Activated B cell treated with CpG ODN at 0.5 μM for 24 hours (primary cell): ENCODE measurements at regions of chr15 and their contacts with region 1.

Region 1: DNA sequence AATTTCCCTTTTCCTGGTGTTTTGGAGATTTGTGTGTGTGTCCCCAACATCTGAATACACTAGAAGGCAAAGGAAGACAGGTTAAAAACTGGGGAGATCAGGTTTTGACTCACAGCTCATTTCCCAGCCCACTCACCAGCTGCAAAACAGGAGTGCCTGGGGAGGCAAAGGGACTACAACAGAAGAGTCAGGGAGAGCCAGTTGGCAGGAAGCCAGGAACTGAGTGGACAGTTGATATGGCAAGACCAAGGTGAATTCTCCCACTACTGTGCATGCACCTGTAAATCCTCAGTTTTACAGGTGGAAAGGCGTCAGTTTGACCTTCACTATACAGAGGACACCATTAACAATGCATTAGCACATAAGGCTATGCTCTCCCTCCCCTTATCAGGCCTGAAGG is 901.5 kb upstream of the SEMA6D start:
- DNase-seq: no peak
- ATAC-seq: no peak
- H3K4me3 Mint-ChIP-seq: no peak overlapping the region
- H3K27ac Mint-ChIP-seq: no peak overlapping the region
- H3K4me1 Mint-ChIP-seq: no peaks in the 10 kb centered on the region
- H3K27me3 Mint-ChIP-seq: no peaks in the 10 kb centered on the region
- CTCF ChIP-seq: no peak

Region 2: GRCh38 chr15:46880791-46881190 is 65.0 kb after region 1 on chr15:
- CTCF ChIA-PET with region 1: no interaction called
- POLR2A ChIA-PET with region 1: no interaction called
- intact Hi-C with region 1: loop called (anchors 10 kb)
- DNase-seq: no peak
- ATAC-seq: no peak
- H3K4me3 Mint-ChIP-seq: no peak overlapping the region
- H3K27ac Mint-ChIP-seq: no peak overlapping the region
- H3K4me1 Mint-ChIP-seq: no peaks in the 10 kb centered on the region
- H3K27me3 Mint-ChIP-seq: no peaks in the 10 kb centered on the region
- CTCF ChIP-seq: no peak